ENCODE measurements at regions of chr3 and their contacts with region 1.

Region 1: DNA sequence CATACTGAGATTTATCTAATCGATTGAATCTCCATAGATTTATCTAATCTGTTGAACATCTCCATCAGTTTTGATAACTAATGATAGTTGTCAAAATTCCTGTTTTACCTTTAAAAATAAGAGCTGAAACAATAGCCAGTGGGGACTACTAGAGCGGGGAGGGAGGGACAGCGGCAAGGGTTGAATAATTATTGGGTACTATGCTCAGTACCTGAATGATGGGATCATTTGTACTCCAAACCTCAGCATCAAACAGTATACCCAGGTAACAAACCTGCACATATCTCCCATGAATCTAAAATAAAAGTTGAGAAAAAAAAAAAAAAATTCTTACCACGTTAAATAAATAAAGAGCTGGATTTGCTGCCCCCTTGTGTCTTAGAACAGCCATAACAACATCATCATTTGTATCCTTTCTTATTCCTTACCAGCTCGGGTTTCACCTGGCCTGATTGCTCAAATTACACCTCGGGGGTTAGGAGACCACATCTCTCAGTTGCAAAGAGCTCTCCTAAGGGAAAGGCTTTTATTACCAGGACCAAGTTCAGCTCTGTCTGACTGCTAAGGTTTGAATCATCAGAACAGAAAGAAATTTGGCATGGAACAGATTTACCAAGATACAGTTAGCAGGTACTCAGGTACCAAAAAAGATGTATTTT is 25.7 kb upstream of the RPL39L start:
- H3K4me3 ChIP-seq: no peak overlapping the region
- H3K27ac ChIP-seq: no peak overlapping the region
- H3K4me1 ChIP-seq: no peaks in the 10 kb centered on the region
- CTCF ChIP-seq: no peak

Region 2: GRCh38 chr3:186849374-186849975 is 315.5 kb before region 1 on chr3:
- CTCF ChIA-PET with region 1: interaction called, 30 read pairs
- POLR2A ChIA-PET with region 1: no interaction called
- H3K4me3 ChIP-seq: no peak overlapping the region
- H3K27ac ChIP-seq: no peak overlapping the region
- H3K4me1 ChIP-seq: no peaks in the 10 kb centered on the region
- CTCF ChIP-seq: no peak

Region 3: GRCh38 chr3:187112934-187113793 is 51.9 kb before region 1 on chr3:
- CTCF ChIA-PET with region 1: interaction called, 24 read pairs
- POLR2A ChIA-PET with region 1: no interaction called
- H3K4me3 ChIP-seq: no peak overlapping the region
- H3K27ac ChIP-seq: no peak overlapping the region
- H3K4me1 ChIP-seq: no peaks in the 10 kb centered on the region
- CTCF ChIP-seq: no peak

Region 4: DNA sequence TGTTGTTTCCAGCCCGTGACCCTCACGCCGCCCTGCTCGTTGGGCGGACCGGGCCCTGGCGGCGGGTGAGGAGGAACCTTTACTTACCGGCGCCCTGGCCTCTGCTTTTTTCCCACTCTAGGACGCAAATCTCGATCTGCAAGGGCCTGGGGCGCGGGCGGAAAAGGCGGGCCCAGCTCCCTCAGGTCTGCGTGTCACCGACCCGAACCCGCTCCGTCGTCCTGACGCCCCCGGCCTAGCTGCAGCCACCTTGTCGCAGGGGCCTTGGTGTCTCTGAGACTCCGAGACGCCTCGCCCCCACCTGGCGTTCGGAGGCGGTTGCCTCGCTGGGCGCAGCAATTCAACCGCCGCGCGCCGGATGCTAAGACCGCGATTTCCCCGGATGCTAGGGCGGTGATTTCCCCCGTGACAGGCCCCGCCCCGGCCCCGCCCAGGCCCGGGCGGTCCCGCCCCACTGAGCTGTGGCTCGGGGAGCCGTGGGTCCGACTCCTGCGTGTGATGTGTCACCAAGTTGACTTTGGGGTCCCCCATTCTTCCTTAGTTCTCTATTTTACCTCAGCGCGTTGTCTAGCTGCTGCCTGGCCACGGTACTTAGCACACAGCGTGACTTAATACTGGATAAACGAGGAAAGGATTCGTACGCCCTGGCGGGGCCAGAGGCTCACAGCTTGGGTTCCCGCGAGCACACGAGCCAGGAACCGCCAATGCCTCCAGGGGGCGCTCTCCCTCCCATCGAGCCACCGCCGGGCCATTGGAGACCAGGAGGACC is 25.7 kb before region 1 on chr3 and contains the start of gene RPL39L:
- CTCF ChIA-PET with region 1: interaction called, 18 read pairs
- POLR2A ChIA-PET with region 1: interaction called, 5 read pairs
- H3K4me3 ChIP-seq: peak within 1 kb of the TSS; percentile 55
- H3K27ac ChIP-seq: peak within 1 kb of the TSS; percentile 22; the same call in 1 of the 2 replicates
- H3K4me1 ChIP-seq: no peaks in the 10 kb centered on the region
- CTCF ChIP-seq: peak; percentile 71

Region 5: DNA sequence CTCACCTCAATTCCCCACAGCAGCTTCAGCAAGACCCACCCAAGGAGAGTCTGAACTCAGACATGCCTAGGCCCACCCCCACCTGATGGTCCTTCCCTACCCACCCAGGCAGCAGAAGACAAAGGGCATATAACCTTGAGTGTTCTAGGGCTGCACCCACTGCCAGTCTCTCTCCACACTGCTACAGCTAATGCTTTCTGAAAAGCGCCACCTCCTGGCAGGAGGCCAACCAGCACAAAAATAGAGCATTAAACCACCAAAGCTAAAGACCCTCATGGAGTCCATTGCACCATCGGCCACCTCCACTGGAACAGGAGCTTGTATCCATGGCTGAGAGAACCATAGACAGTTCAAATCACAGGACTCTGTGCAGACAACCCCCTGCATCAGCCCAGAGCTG is 14.4 kb before region 1 on chr3:
- CTCF ChIA-PET with region 1: interaction called, 10 read pairs
- POLR2A ChIA-PET with region 1: no interaction called
- H3K4me3 ChIP-seq: no peak overlapping the region
- H3K27ac ChIP-seq: no peak overlapping the region
- H3K4me1 ChIP-seq: no peaks in the 10 kb centered on the region
- CTCF ChIP-seq: no peak

Measured in HEK293 (cell line).